K562 (cell line): ENCODE measurements at regions of chr6 and their contacts with region 1.

Region 1: DNA sequence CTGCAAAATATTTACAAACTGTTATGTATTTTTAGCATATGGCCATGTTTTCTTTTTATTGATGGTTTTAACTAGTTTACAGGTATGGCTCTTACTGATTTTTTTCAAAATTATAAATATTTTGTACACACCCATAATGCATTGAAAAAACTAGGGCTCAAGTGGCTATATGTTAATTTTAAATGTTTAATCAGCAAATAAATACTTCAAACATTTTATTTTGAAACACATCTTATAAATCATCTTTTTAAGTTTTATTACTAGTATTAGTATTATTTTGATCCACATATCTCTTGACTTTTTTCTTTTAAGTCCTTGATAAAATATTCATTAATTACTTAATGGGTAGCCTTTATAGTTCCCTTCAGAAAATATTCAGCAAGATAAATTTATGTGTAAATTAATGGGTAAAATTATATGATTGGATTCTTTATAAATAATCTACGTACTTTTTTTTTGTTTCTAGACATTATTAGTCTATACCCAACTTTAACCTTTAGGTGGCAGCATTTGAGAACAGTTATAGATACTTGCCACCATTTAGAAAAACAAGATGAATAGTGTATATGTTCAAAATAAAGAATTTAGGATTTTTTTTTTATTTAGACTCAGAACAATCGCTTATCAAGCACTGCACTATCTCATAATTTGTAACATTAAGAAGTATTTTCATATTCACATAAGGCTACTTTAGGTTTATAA is 241.9 kb downstream of the ADGRB3 start:
- DNase-seq: peak in 2 of 4 experiments; percentile 15 to 39
- ATAC-seq: no peak; the same call in 2 of the 3 replicates
- H3K4me3 ChIP-seq: no peak overlapping the region
- H3K27ac ChIP-seq: no peak overlapping the region
- H3K4me1 ChIP-seq: no peaks in the 10 kb centered on the region
- H3K27me3 ChIP-seq: no peaks in the 10 kb centered on the region
- CTCF ChIP-seq: peak in 1 of 3 experiments; percentile 59; a peak in 2 of 6 replicates
- EP300 ChIP-seq: no peak
- POLR2A ChIP-seq: no peak
- RAD21 ChIP-seq: peak; percentile 43 to 58

Region 2: GRCh38 chr6:69069881-69070280 is 192.9 kb after region 1 on chr6:
- CTCF ChIA-PET with region 1: no interaction called
- POLR2A ChIA-PET with region 1: no interaction called
- in situ Hi-C with region 1: no loop called
- intact Hi-C with region 1: loop called (anchors 10 kb)
- DNase-seq: no peak
- ATAC-seq: no peak
- H3K4me3 ChIP-seq: no peak overlapping the region
- H3K27ac ChIP-seq: no peak overlapping the region
- H3K4me1 ChIP-seq: peaks cover 3% of the 10 kb centered on the region in 2 experiments; a peak in 1 of 5 replicates
- H3K27me3 ChIP-seq: no peaks in the 10 kb centered on the region
- CTCF ChIP-seq: no peak
- EP300 ChIP-seq: no peak
- POLR2A ChIP-seq: no peak
- RAD21 ChIP-seq: no peak

Region 3: DNA sequence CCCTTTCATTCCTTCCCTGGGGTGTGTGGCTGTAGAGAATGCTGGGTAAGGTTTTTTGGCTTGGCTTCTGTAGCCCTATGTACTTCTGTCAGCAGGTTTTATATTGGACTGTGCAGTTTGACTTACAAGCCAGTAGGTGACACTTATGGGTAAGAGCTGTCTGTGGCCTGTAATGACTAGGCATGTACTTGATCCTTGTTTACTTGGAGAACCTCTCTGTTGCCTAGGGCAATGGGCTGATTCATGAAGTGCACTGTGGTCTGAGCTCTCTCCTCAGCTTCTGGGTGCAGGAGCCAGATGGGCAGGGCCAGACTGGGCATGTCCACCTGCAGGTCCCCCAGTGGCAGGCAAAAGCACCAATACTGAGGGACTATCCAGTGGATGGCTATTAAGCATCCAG is 302.7 kb after region 1 on chr6:
- CTCF ChIA-PET with region 1: no interaction called
- POLR2A ChIA-PET with region 1: no interaction called
- in situ Hi-C with region 1: no loop called
- intact Hi-C with region 1: no loop called
- DNase-seq: no peak
- ATAC-seq: peak; percentile 51; the same call in 1 of the 3 replicates
- H3K4me3 ChIP-seq: no peak overlapping the region
- H3K27ac ChIP-seq: no peak overlapping the region
- H3K4me1 ChIP-seq: no peaks in the 10 kb centered on the region
- H3K27me3 ChIP-seq: no peaks in the 10 kb centered on the region
- CTCF ChIP-seq: no peak
- EP300 ChIP-seq: no peak
- POLR2A ChIP-seq: no peak
- RAD21 ChIP-seq: no peak

Region 4: DNA sequence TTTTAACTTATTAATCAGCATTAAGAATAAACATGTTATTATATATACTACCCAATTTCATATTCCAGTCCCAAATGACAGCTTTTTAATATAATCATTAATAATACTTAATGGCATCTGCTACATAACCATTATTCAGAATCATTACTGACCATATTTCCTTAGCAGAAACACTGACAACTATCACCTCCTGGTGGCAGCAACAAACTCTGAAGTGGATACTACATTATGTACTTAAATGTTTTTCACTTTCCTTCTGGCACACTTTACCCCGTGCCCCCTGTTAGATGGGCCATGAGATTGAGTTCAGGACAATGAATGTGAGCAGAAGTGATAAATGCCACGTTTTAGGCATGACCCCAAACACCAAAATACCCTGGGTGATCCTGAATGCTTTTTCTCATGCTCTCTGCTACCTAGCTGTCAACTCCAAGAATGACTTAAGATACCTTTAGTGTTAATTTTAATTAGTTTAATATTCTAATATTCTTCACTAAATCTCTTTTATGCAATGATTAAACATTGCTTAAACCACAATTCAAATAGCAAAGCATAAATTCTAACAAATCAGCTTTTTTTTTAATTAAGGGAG is 842.8 kb after region 1 on chr6:
- CTCF ChIA-PET with region 1: no interaction called
- POLR2A ChIA-PET with region 1: no interaction called
- in situ Hi-C with region 1: no loop called
- intact Hi-C with region 1: loop called (anchors 10 kb)
- DNase-seq: peak; percentile 8 to 18 (median 12)
- ATAC-seq: peak; percentile 60; the same call in 1 of the 3 replicates
- H3K4me3 ChIP-seq: no peak overlapping the region
- H3K27ac ChIP-seq: no peak overlapping the region
- H3K4me1 ChIP-seq: no peaks in the 10 kb centered on the region
- H3K27me3 ChIP-seq: no peaks in the 10 kb centered on the region
- CTCF ChIP-seq: peak in 2 of 3 experiments; percentile 7 to 30; a peak in 3 of 6 replicates
- EP300 ChIP-seq: no peak
- POLR2A ChIP-seq: no peak
- RAD21 ChIP-seq: no peak; a peak in 1 of 4 replicates

Region 5: DNA sequence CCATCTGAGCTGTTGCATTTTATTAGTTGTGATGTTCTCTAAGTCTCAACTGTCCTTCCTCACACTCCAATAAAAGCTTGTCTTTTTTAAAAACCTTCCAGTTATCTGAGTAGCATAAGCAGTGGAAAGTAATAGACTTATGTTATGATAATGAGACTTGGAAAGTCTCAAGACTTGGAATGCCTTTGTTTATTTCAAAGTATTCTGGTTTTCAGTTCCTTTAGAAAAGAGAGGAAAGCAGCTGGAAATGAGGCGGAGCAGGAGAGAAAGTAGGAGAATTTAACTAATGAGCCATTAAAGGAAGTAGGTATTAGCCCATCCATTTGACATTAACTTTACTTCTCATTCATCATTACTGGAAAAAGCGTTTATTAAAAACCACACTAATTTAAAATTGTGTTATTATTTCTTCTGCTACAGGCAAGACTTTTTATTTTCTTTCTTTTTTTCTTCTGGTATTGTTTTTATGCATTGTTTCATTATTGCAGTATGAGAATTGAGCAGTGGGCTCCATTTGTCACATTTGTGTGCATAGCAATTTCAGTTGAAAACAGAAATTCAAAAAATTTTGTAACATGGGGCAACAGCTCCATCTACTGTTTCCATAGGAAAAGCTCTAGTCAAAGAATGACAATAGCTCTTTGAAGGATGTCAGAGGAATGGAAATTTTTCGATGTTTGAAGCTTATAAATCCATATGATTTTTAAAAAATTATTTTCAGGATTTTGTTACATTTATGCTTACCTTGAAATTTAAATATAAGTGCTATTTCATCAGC is 1231.1 kb after region 1 on chr6:
- CTCF ChIA-PET with region 1: no interaction called
- POLR2A ChIA-PET with region 1: no interaction called
- in situ Hi-C with region 1: no loop called
- intact Hi-C with region 1: loop called (anchors 10 kb)
- DNase-seq: peak; percentile 34 to 55 (median 36)
- ATAC-seq: peak; percentile 61; the same call in 2 of the 3 replicates
- H3K4me3 ChIP-seq: no peak overlapping the region
- H3K27ac ChIP-seq: no peak overlapping the region
- H3K4me1 ChIP-seq: no peaks in the 10 kb centered on the region
- H3K27me3 ChIP-seq: no peaks in the 10 kb centered on the region; a peak in 1 of 5 replicates
- CTCF ChIP-seq: peak; percentile 30 to 75 (median 53); a peak in 4 of 6 replicates
- EP300 ChIP-seq: no peak
- POLR2A ChIP-seq: no peak
- RAD21 ChIP-seq: peak; percentile 83 to 84